Activated CD4-positive, alpha-beta T cell treated with anti-CD3 and anti-CD28 coated beads, Interleukin-2, amount 10 ng/mL, durations not matched to agents 24 days and 14 days (primary cell): ENCODE measurements at regions of chr2 and their contacts with region 1.

Region 1: GRCh38 chr2:68282811-68283418 is 30.6 kb upstream of the PPP3R1 start:
- DNase-seq: peak; percentile 69
- H3K4me3 Mint-ChIP-seq: no peak overlapping the region
- H3K27ac Mint-ChIP-seq: no peak overlapping the region
- H3K4me1 Mint-ChIP-seq: peaks cover 1% of the 10 kb centered on the region
- H3K27me3 Mint-ChIP-seq: peaks cover 41% of the 10 kb centered on the region

Region 2: DNA sequence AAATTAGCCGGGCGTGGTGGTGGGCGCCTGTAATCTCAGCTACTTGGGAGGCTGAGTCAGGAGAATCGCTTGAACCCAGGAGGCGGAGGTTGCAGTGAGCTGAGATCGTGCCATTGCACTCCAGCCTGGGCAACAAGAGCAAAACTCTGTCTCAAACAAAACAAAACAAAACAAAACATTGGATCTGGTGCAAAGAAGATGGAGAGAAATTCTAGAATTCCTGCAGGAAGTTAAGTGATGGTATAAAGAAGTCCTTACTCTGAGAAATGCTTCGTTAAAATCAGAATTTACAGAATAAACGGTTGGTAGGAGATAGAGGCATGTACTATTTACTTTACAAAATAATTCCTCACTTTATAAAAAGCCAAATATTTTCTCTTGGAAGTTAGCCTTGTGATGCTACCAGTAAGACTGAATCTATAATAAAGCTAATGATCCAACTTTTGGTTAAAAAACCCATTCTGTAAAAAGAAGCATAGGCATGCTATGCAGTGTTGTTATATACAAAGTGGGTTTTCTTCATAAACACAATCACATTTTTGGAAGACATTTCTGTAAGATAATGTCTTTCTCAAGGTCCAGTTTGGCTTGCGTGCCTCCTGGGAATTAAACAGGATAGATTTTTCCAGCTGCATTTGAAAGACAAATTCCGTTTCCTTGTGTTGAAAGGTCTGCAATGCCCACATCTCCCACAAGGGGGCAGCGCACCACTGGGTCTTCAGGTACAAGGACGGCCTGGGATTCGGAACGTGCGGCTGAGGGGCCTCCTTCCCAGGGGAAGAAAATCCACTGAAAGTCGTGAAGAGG is 160.8 kb before region 1 on chr2:
- intact Hi-C with region 1: loop called (anchors 1 kb)
- DNase-seq: peak; percentile 92
- H3K4me3 Mint-ChIP-seq: no peak overlapping the region
- H3K27ac Mint-ChIP-seq: no peak overlapping the region
- H3K4me1 Mint-ChIP-seq: peaks cover 4% of the 10 kb centered on the region
- H3K27me3 Mint-ChIP-seq: peaks cover 2% of the 10 kb centered on the region

Region 3: GRCh38 chr2:68196120-68196716 is 86.7 kb before region 1 on chr2:
- intact Hi-C with region 1: loop called (anchors 2 kb)
- DNase-seq: peak; percentile 76
- H3K4me3 Mint-ChIP-seq: no peak overlapping the region
- H3K27ac Mint-ChIP-seq: no peak overlapping the region
- H3K4me1 Mint-ChIP-seq: peaks cover 29% of the 10 kb centered on the region
- H3K27me3 Mint-ChIP-seq: no peaks in the 10 kb centered on the region